ENCODE measurements at regions of chr6 and their contacts with region 1.

Region 1: DNA sequence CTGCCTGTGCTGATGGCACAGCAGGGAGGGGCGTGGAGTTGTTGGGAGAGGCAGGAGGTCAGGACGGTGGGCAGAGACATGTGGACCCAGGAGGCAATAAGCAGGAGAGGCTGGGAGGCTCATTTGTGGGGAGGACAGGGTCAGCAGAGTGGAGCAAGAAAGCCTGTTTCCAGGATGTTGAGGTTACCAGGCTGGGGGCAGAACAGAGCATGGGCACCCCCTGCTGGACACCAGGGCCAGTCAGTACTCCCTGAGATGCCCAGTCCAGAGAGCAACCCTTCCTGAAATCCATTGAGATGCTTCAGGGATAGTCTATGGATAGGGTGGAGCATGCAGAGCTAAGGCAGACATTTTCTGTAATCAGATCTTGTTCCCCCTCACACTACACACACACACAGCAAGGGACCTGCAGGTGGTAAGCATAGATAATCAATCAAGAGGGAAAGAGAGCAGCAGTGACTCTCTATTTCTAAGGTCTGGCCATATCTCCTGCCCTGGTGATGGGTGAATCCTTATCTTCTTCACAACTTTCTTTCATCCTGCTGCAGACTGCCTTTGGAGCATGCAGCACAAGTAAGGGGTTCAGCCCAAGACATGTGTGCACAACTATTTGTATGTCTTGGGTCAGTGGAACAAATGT is 41.7 kb downstream of the MOCS1 start:
- DNase-seq: peak; percentile 2
- ATAC-seq: peak; percentile 98
- H3K4me3 ChIP-seq: no peak overlapping the region
- H3K27ac ChIP-seq: no peak overlapping the region
- H3K4me1 ChIP-seq: no peaks in the 10 kb centered on the region
- H3K27me3 ChIP-seq: no peaks in the 10 kb centered on the region
- CTCF ChIP-seq: peak; percentile 44 to 73 (median 67); a peak in 5 of 6 replicates
- EP300 ChIP-seq: no peak
- POLR2A ChIP-seq: no peak
- RAD21 ChIP-seq: peak; percentile 49

Region 2: DNA sequence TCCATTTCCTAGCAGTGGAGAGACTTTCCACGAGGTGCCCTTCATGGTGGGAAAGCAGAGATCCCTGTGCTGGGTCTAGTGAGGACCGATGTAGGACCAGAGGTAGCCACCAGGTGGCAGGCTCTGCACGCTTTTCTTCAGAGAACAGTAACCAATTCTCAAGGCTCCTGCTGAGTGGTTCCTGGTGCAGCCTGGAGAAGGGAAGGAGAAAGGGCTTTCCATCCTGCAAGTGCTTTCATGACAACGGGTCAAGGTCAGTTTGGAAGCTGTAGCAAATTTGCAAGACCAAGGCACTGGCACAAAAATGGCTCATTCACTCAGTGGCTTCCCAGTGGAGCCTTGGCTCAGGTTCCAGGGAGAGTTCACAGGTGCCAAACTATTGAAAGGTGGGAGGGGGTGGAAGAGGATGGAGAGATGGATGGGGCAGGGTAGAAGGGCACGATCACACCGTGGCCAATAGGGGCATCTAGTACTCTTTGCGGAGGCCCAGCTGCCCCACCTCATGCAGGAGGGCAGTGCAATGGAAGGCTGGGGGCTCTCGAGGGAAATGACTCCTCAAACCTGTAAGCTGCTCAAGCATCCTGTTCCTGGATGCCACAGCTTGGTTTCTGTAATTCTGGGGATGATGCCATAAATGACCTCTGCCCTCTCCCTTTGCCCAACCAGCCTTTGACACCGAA is 544.6 kb before region 1 on chr6:
- CTCF ChIA-PET with region 1: interaction called, 3 read pairs
- POLR2A ChIA-PET with region 1: no interaction called
- RAD21 ChIA-PET with region 1: no interaction called
- SMC1A ChIA-PET with region 1: interaction called, 5 read pairs
- in situ Hi-C with region 1: loop called (anchors 10 kb)
- intact Hi-C with region 1: loop called (anchors 5 kb)
- DNase-seq: no peak
- ATAC-seq: peak; percentile 96
- H3K4me3 ChIP-seq: no peak overlapping the region
- H3K27ac ChIP-seq: no peak overlapping the region
- H3K4me1 ChIP-seq: peaks cover 2% of the 10 kb centered on the region
- H3K27me3 ChIP-seq: no peaks in the 10 kb centered on the region
- CTCF ChIP-seq: peak; percentile 86 to 93 (median 92)
- EP300 ChIP-seq: no peak
- POLR2A ChIP-seq: no peak
- RAD21 ChIP-seq: peak; percentile 78

Region 3: GRCh38 chr6:39377539-39377950 is 515.1 kb before region 1 on chr6:
- CTCF ChIA-PET with region 1: interaction called, 39 read pairs
- POLR2A ChIA-PET with region 1: no interaction called
- RAD21 ChIA-PET with region 1: interaction called, 4 read pairs
- SMC1A ChIA-PET with region 1: interaction called, 41 read pairs
- in situ Hi-C with region 1: no loop called
- intact Hi-C with region 1: loop called (anchors 1 kb)
- DNase-seq: no peak
- ATAC-seq: peak; percentile 95
- H3K4me3 ChIP-seq: no peak overlapping the region
- H3K27ac ChIP-seq: no peak overlapping the region
- H3K4me1 ChIP-seq: no peaks in the 10 kb centered on the region
- H3K27me3 ChIP-seq: no peaks in the 10 kb centered on the region
- CTCF ChIP-seq: peak; percentile 50 to 73 (median 67)
- EP300 ChIP-seq: no peak
- POLR2A ChIP-seq: no peak
- RAD21 ChIP-seq: peak; percentile 75

Region 4: DNA sequence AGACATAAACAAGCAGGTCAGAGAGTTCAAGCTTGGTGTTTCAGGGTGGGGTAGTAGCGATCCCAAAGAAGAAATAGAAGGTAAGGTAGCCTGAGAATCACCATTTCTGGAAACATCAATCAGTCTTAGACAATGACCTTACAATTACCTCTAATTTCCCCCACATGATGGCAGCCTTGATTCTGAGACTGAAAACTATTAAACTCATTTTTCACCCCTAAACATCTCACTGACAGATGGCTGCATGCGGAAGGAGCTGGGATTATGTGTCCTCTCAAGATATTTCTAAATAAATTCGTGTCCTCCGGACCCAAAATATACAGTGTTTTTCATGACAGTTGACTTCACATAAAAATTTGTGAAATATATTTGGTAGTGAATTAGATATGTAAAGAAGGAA is 228.4 kb before region 1 on chr6:
- CTCF ChIA-PET with region 1: no interaction called
- POLR2A ChIA-PET with region 1: no interaction called
- RAD21 ChIA-PET with region 1: interaction called, 3 read pairs
- SMC1A ChIA-PET with region 1: no interaction called
- in situ Hi-C with region 1: no loop called
- intact Hi-C with region 1: loop called (anchors 2 kb)
- DNase-seq: no peak
- ATAC-seq: peak; percentile 50
- H3K4me3 ChIP-seq: no peak overlapping the region
- H3K27ac ChIP-seq: no peak overlapping the region
- H3K4me1 ChIP-seq: no peaks in the 10 kb centered on the region
- H3K27me3 ChIP-seq: no peaks in the 10 kb centered on the region
- CTCF ChIP-seq: peak in 1 of 3 experiments; percentile 13; a peak in 1 of 6 replicates
- EP300 ChIP-seq: no peak
- POLR2A ChIP-seq: no peak
- RAD21 ChIP-seq: peak; percentile 29; the same call in 1 of the 2 replicates

Region 5: DNA sequence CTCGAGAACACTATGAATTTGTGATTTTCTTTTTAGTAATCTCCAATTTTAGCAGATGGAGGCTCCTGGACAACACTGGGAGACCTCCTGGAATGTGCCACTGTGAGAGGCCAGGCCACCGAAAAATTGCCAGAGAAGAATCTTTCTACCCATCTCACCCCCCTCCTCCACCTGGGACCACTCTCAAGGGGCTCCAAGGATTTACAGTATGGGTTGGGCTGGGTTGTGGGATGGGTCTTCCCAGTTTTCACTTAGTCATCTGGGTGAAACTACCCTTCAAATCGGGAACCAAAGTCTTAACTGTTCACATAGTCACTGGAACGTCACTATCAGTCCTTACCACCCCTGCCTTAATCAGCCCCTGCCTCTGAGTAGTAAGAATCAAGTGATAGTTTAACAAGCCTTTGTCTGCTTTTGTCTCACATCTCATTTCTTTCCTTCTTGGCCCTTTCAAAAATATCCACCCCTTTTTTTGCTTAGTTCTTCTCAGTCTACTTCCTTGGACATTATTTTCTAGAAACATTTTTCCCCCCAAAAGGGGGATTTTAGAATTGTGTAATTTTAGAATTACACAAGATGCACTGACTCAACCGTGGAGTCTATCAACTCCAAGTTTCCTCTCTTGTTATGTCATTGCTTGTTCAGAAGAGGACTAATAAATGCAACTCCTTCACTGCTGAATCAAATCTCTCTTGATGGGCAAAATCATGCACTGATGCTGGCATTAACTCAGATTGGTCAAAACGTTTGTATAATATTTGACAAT is 189.9 kb after region 1 on chr6:
- CTCF ChIA-PET with region 1: no interaction called
- POLR2A ChIA-PET with region 1: no interaction called
- RAD21 ChIA-PET with region 1: no interaction called
- SMC1A ChIA-PET with region 1: no interaction called
- in situ Hi-C with region 1: no loop called
- intact Hi-C with region 1: no loop called
- DNase-seq: no peak
- ATAC-seq: no peak
- H3K4me3 ChIP-seq: no peak overlapping the region
- H3K27ac ChIP-seq: no peak overlapping the region
- H3K4me1 ChIP-seq: no peaks in the 10 kb centered on the region
- H3K27me3 ChIP-seq: no peaks in the 10 kb centered on the region
- CTCF ChIP-seq: no peak
- EP300 ChIP-seq: no peak
- POLR2A ChIP-seq: no peak
- RAD21 ChIP-seq: no peak